ENCODE measurements at regions of chr3 and their contacts with region 1.

Region 1: DNA sequence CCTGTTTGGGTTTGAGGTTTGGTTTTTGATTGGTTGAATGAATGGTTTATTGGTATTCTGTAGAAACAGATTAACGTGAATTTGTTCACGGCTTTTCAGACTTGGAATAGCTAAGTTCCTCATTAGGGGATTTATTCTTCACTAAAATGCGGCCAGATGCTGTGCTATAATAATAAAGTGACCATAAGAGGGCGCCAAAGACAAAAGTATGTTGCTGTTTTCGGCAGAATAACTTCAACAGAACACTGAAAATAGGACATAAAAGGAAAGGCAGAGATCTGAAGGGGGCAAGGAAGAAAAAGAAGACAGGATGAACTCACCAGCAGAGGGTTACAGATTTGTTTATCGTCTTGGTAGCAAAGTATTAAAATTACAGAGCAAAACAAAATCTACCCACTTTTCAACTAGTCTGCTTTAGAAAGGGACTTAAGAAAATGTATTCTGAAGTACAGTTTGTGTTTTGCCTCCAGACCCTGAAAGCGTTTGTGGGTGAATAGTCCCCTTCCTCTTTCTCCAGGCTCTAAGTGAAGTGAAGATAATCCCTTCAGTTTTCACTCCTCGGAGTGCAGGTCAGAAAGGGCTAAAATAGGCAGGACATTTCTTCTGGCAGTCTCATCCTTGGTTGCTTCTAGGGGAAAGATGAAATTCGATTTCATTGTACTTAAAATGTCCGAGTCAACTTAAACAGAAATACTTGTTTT is 147.6 kb downstream of the IL20RB start:
- DNase-seq: peak; percentile 56
- CTCF ChIP-seq: peak; percentile 41

Region 2: GRCh38 chr3:137692803-137693431 is 587.5 kb after region 1 on chr3:
- in situ Hi-C with region 1: loop called (anchors 25 kb)
- DNase-seq: peak; percentile 41
- CTCF ChIP-seq: peak; percentile 67

Region 3: GRCh38 chr3:137759505-137759904 is 654.1 kb after region 1 on chr3:
- in situ Hi-C with region 1: no loop called
- DNase-seq: no peak
- CTCF ChIP-seq: no peak

Region 4: GRCh38 chr3:137946345-137946973 is 841.0 kb after region 1 on chr3:
- in situ Hi-C with region 1: loop called (anchors 25 kb)
- DNase-seq: peak; percentile 53
- CTCF ChIP-seq: peak; percentile 67

Measured in GM13976 (cell line).